ENCODE measurements at regions of chr7 and their contacts with region 1.

Region 1: GRCh38 chr7:5450549-5451372 is 27.1 kb upstream of the TNRC18 start:
- DNase-seq: peak; percentile 66 to 84
- ATAC-seq: peak; percentile 76
- H3K4me3 ChIP-seq: no peak overlapping the region
- H3K27ac ChIP-seq: no peak overlapping the region
- H3K4me1 ChIP-seq: no peaks in the 10 kb centered on the region
- H3K27me3 ChIP-seq: no peaks in the 10 kb centered on the region

Region 2: DNA sequence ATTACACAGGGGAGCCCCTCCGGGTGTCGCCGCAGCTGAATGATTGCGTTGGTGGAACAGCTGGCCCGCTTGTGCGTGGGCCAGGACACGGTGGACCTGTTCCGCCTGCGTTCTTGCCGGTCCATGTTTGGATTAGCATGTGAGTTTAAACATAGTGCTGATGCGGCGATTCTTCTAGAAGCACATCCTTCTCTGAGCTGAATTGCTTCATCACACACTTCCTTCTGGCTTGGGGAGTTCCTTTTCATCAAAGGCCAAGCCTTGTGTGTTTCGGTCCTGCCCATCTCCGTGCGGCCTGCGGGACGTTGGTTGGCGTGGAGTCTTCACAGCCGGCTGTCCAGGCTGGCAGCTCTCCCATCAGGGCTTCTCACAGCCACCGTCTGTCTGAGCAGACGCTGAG is 213.5 kb before region 1 on chr7:
- intact Hi-C with region 1: loop called (anchors 2 to 10 kb)
- DNase-seq: peak in 1 of 2 donors; percentile 90
- ATAC-seq: peak; percentile 28
- H3K4me3 ChIP-seq: no peak overlapping the region
- H3K27ac ChIP-seq: no peak overlapping the region
- H3K4me1 ChIP-seq: no peaks in the 10 kb centered on the region
- H3K27me3 ChIP-seq: no peaks in the 10 kb centered on the region

Region 3: DNA sequence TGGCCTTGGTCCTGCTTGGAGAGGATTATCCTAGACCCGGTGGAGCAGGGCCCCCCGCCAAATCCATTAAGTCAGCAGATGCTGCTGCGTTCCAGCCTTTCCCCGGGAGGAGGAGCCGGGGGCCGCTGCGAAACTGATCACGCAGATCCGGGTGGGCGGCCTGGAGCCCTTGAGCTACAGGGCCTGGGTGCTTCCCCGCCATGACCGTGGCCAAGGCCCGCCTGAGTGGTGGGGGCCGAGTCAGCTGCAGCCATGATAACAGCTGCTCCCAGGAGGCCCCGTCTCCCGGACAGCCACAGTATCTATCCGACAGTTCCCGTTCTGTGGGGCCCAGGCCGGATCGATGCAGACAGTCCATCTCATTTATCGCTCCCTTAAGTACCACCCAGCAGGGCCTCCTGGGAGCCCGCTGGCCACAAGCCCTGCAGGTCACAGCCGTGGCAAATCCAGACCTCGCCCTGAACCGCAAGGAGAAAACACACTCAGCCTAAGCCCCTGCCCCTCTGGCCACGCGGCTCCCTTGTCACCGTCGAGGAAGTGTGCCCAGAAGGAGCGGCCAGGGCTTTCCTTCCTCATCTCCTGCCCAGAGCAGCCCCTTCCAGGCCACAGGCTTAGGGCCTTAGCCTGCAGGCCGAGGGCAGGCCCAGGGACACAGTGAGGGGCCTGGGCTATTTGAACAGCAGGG is 202.4 kb before region 1 on chr7:
- intact Hi-C with region 1: loop called in 1 of 2 experiments (anchors 10 kb)
- DNase-seq: peak; percentile 68 to 80
- ATAC-seq: peak; percentile 80
- H3K4me3 ChIP-seq: no peak overlapping the region
- H3K27ac ChIP-seq: no peak overlapping the region
- H3K4me1 ChIP-seq: no peaks in the 10 kb centered on the region
- H3K27me3 ChIP-seq: no peaks in the 10 kb centered on the region

Region 4: DNA sequence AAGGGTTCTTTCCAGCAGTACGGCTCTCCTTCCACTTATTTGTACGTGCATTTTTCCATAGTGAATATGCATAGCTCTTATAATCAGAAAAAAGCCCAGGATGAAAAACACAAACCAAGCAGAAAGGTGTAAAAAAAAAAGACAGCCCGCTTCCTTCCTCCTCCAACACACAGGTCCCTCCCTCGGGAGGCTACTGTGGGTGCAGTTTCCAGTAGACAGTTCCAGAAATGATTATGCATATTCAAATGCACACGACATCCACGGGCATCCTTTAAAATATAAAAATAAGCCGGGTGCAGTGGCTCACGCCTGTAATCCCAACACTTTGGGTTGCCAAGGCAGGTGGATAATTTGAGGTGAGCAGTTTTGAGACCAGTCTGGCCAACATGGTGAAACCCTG is 87.0 kb before region 1 on chr7:
- intact Hi-C with region 1: loop called (anchors 10 kb)
- DNase-seq: no peak
- ATAC-seq: no peak
- H3K4me3 ChIP-seq: no peak overlapping the region
- H3K27ac ChIP-seq: no peak overlapping the region
- H3K4me1 ChIP-seq: no peaks in the 10 kb centered on the region
- H3K27me3 ChIP-seq: no peaks in the 10 kb centered on the region

Region 5: DNA sequence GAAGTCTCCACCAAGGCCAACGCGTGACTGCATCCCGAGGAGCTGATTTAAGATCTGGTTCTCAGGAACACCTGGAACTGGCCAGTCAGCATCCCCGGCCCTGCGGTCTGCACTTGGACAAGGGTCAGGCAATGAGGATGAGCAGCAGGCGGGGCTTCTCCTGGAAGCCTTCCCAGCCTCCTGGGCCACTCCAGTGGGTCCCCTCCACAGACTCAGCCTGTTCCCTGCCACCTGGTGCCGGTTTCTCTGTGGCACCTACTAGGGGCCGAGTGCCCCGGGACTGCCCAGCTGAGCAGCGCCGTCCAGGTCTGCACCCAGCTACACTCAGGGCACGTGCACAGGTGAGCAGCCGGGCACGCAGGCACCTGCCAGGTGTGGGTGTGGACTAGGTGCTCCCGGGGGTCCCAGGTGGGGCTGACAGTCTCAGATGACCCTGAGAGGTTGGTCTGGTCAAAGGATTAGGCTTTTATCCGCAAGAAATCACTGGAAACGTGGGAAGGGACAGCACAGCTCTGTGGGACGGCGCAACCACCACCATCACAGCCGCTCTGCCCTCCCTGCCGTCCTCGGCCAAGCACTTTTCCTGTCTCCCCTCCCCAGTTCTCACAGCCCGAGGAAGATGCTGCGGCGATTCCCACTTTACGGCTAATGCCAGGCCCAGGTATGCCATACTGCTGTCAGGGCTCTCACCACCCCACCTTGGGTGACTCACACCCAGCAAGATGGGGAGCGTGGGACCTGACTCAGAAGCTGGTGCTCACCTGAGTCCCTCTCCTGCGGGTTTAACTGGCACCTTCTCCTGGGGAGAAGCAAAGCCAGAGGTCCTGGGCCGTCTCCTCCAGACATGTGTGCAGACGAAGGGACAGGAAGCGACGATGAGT is 164.7 kb after region 1 on chr7:
- intact Hi-C with region 1: no loop called
- DNase-seq: no peak
- ATAC-seq: no peak
- H3K4me3 ChIP-seq: no peak overlapping the region
- H3K27ac ChIP-seq: no peak overlapping the region
- H3K4me1 ChIP-seq: no peaks in the 10 kb centered on the region
- H3K27me3 ChIP-seq: no peaks in the 10 kb centered on the region

Measured in aorta (tissue), 5 donors.